HCT116 (cell line): ENCODE measurements at regions of chr3 and their contacts with region 1.

Region 1: GRCh38 chr3:64484289-64484992 is 203.4 kb downstream of the ADAMTS9 start:
- DNase-seq: peak; percentile 54
- ATAC-seq: peak; percentile 99
- H3K4me3 ChIP-seq: no peak overlapping the region
- H3K27ac ChIP-seq: no peak overlapping the region
- H3K4me1 ChIP-seq: no peaks in the 10 kb centered on the region
- H3K27me3 ChIP-seq: 0 out of 2 replicates have a peak, but pooled peaks cover 4% of the 10 kb centered on the region
- CTCF ChIP-seq: peak; percentile 71 to 79 (median 74)
- POLR2A ChIP-seq: no peak
- RAD21 ChIP-seq: peak; percentile 87

Region 2: DNA sequence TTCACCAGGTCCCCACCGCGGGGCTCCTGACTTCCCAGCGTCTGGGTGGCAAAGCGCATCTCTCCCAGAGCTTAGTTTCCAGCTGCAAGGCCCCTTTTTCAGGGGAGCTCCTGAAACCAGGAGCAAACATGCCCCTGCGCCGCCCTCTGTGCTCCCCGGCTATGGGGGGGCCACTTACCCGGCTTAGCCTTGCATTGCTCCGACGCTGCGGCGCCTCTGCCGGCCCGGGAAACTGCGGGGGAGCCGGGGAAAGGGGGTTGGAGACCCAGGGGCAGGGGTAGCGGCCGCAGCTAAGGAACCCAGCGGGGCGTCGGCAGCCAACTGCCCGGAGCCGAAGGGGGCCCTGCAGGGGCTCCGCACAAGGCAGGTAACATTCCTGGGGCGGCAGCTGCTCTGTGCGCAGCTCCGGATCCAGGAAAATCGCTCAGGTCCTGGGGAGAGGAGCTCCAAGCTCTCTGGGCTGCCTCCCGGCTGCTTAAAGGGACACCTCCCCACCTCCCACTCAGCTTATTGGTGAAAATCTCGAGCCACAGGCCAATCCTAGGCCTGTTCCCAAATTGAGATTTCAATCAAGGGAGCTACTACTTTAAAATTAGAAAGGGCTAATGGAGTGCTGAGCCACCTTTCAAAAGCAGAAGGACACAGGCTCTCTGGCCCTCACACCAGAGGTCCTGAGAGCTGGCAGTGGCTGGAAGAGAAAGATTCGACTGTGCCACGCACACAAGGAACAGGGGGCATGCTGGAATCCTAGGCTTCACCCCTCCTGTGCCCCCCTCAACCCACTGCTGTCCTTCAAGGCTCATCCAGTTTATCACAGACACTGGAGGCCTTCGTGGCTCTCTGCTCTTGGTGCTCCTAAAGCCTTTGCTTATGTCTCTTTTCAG is 216.5 kb before region 1 on chr3:
- CTCF ChIA-PET with region 1: interaction called, 3 read pairs
- POLR2A ChIA-PET with region 1: no interaction called
- RAD21 ChIA-PET with region 1: no interaction called
- intact Hi-C with region 1: loop called (anchors 10 kb)
- DNase-seq: no peak
- ATAC-seq: no peak
- H3K4me3 ChIP-seq: no peak overlapping the region
- H3K27ac ChIP-seq: no peak overlapping the region
- H3K4me1 ChIP-seq: no peaks in the 10 kb centered on the region
- H3K27me3 ChIP-seq: peaks cover 24% of the 10 kb centered on the region
- CTCF ChIP-seq: no peak
- POLR2A ChIP-seq: no peak
- RAD21 ChIP-seq: no peak

Region 3: GRCh38 chr3:64548200-64548889 is 63.9 kb after region 1 on chr3:
- CTCF ChIA-PET with region 1: no interaction called
- POLR2A ChIA-PET with region 1: no interaction called
- RAD21 ChIA-PET with region 1: no interaction called
- intact Hi-C with region 1: no loop called
- DNase-seq: no peak
- ATAC-seq: no peak
- H3K4me3 ChIP-seq: no peak overlapping the region
- H3K27ac ChIP-seq: no peak overlapping the region
- H3K4me1 ChIP-seq: no peaks in the 10 kb centered on the region
- H3K27me3 ChIP-seq: peaks cover 30% of the 10 kb centered on the region
- CTCF ChIP-seq: no peak
- POLR2A ChIP-seq: no peak
- RAD21 ChIP-seq: no peak

Region 4: DNA sequence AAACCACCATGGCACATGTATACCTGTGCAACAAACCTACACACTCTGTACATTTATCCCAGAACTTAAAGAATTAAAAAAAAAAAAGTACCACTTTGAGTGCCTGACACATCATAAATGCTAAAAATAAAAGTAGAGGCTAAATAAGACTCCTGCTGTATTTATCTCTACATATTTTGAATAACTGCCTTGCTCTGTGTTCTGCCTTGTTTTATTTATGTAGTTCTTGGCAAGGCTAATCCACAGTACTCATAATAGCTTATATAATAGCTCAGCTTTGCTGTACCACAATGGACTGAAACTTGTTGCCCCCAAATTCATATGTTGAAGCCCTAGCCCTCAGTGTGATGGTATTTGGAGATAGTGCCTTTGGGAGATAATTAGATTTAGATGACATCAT is 298.8 kb after region 1 on chr3:
- CTCF ChIA-PET with region 1: no interaction called
- POLR2A ChIA-PET with region 1: no interaction called
- RAD21 ChIA-PET with region 1: no interaction called
- intact Hi-C with region 1: no loop called
- DNase-seq: no peak
- ATAC-seq: no peak
- H3K4me3 ChIP-seq: no peak overlapping the region
- H3K27ac ChIP-seq: no peak overlapping the region
- H3K4me1 ChIP-seq: no peaks in the 10 kb centered on the region
- H3K27me3 ChIP-seq: no peaks in the 10 kb centered on the region
- CTCF ChIP-seq: no peak
- POLR2A ChIP-seq: no peak
- RAD21 ChIP-seq: no peak